ENCODE measurements at regions of chr2 and their contacts with region 1.

Region 1: DNA sequence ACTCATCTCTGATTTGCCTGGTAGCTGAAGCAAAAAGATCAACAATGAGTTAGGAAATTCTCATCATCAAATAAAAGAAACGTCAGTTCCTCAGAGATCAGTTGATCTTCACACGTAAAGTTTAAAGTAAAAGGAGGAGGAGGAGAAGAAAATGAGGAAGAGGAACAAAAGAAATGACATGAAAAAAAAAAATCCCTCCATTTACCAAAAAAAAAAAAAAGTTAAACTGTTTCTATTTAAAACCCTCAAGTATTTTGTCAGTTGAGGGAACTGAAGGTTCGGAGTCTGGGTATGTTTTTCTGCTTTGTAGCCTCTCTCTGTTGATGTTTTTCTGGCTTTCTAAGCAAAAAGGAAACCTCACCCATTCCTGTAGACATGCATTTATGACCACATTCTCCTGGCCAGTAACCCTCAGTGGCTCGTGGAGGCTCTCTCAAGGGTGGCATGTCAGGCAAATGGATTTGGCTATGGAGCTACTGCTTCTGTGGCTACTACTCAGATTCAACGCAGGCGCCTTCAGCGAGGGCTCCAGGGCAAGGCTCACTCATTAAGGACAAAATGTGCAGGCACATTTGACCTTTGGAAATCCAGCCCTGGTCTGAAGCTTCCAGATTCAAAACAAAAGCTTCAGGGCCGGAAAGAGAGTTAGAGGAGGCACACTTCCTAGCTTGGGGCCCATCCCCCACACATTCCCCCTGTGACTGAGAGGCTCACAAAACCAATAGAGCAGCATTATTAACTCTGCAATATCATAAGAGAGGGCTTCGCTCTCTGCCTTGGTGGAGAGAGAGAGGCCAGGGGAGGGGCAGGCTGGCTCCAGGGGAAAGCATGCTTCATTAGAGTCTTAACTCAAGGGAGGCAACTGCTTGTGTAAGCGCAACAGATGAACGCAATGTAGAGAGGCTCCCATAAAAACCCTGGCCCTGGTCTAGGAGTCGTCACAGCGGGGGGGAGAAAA is 22.3 kb downstream of the KLF7 start:
- DNase-seq: peak; percentile 34 to 92 (median 83)
- ATAC-seq: peak; percentile 83
- H3K4me3 ChIP-seq: peak overlapping the region; percentile 57
- H3K4me3 Mint-ChIP-seq: peak overlapping the region; percentile 59 to 90 (median 80)
- H3K27ac ChIP-seq: peak overlapping the region; percentile 86
- H3K27ac Mint-ChIP-seq: peak overlapping the region; percentile 92 to 99 (median 96)
- H3K4me1 ChIP-seq: peaks cover 17 to 51% of the 10 kb centered on the region in 2 donors
- H3K4me1 Mint-ChIP-seq: peaks cover 45 to 95% (median 87%) of the 10 kb centered on the region in 7 donors
- H3K27me3 ChIP-seq: no peaks in the 10 kb centered on the region
- H3K27me3 Mint-ChIP-seq: no peaks in the 10 kb centered on the region

Region 2: DNA sequence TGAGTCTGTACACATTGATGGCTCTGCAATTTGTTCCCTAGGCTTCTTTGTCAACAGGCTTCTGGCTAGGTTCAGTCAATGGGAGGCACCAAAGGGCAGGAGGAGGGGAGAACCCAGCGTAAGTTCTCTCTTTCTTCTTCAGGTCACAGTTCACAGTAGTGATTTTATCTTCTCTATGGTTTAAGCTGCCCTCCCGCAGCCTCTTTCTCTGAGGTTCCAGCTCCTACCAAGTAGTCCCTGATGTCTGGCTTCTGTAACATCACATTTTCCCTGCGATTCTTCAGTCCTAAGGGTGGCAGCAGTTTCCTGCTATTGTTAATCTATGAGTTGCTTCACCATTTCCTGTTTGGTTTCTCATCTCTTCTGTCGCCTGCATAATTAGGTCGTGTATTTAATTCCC is 96.8 kb before region 1 on chr2:
- CTCF ChIA-PET with region 1: interaction called, 5 read pairs
- POLR2A ChIA-PET with region 1: interaction called, 8 read pairs
- intact Hi-C with region 1: loop called in 1 of 2 experiments (anchors 1 kb)
- DNase-seq: peak in 8 of 9 donors; percentile 24 to 69 (median 52)
- ATAC-seq: peak; percentile 79
- H3K4me3 ChIP-seq: no peak overlapping the region
- H3K4me3 Mint-ChIP-seq: peak overlapping the region in 8 of 10 donors; percentile 0 to 66 (median 12)
- H3K27ac ChIP-seq: no peak overlapping the region
- H3K27ac Mint-ChIP-seq: peak overlapping the region; percentile 2 to 78 (median 56)
- H3K4me1 ChIP-seq: peaks cover 0 to 4% of the 10 kb centered on the region in 2 donors
- H3K4me1 Mint-ChIP-seq: peaks cover 11 to 14% (median 13%) of the 10 kb centered on the region in 7 donors
- H3K27me3 ChIP-seq: no peaks in the 10 kb centered on the region
- H3K27me3 Mint-ChIP-seq: peaks cover 0 to 16% (median 0%) of the 10 kb centered on the region in 5 donors

Region 3: DNA sequence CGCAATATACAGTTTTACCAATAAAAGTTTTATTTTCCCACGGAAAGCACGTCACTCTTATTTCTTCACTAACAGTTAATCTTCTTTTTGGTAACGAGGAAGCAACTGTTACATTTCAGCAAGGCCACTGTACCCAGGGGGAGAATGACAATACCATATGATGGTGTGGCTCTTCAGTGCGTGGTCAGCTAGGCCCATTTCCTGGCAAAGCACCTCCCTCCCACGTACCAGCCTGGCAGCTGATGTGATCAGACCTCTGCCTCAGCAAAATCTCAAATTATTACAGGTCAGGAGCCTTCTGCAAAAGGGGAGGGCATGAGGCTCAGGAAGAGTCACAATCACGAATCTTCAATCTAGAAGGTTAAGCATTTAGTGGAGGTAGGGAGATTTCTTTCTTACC is 33.2 kb before region 1 on chr2:
- CTCF ChIA-PET with region 1: no interaction called
- POLR2A ChIA-PET with region 1: interaction called, 18 read pairs
- intact Hi-C with region 1: no loop called
- DNase-seq: no peak
- ATAC-seq: no peak
- H3K4me3 ChIP-seq: no peak overlapping the region
- H3K4me3 Mint-ChIP-seq: no peak overlapping the region
- H3K27ac ChIP-seq: no peak overlapping the region
- H3K27ac Mint-ChIP-seq: peak overlapping the region in 1 of 9 donors; percentile 40
- H3K4me1 ChIP-seq: peaks cover 0 to 7% of the 10 kb centered on the region in 2 donors
- H3K4me1 Mint-ChIP-seq: peaks cover 19 to 83% (median 63%) of the 10 kb centered on the region in 7 donors
- H3K27me3 ChIP-seq: no peaks in the 10 kb centered on the region
- H3K27me3 Mint-ChIP-seq: no peaks in the 10 kb centered on the region

Region 4: GRCh38 chr2:207121784-207122183 is 21.7 kb before region 1 on chr2:
- CTCF ChIA-PET with region 1: no interaction called
- POLR2A ChIA-PET with region 1: interaction called, 12 read pairs
- intact Hi-C with region 1: no loop called
- DNase-seq: no peak
- ATAC-seq: no peak
- H3K4me3 ChIP-seq: no peak overlapping the region
- H3K4me3 Mint-ChIP-seq: no peak overlapping the region
- H3K27ac ChIP-seq: no peak overlapping the region
- H3K27ac Mint-ChIP-seq: no peak overlapping the region
- H3K4me1 ChIP-seq: peaks cover 0 to 6% of the 10 kb centered on the region in 2 donors
- H3K4me1 Mint-ChIP-seq: peaks cover 29 to 89% (median 55%) of the 10 kb centered on the region in 7 donors
- H3K27me3 ChIP-seq: no peaks in the 10 kb centered on the region
- H3K27me3 Mint-ChIP-seq: no peaks in the 10 kb centered on the region

Region 5: GRCh38 chr2:207238831-207239701 is 95.6 kb after region 1 on chr2:
- CTCF ChIA-PET with region 1: interaction called, 3 read pairs
- POLR2A ChIA-PET with region 1: interaction called, 11 read pairs
- intact Hi-C with region 1: loop called in 1 of 2 experiments (anchors 5 kb)
- DNase-seq: peak in 1 of 9 donors; percentile 54
- ATAC-seq: peak; percentile 69
- H3K4me3 ChIP-seq: no peak overlapping the region
- H3K4me3 Mint-ChIP-seq: peak overlapping the region in 6 of 10 donors; percentile 13 to 63 (median 44)
- H3K27ac ChIP-seq: no peak overlapping the region
- H3K27ac Mint-ChIP-seq: peak overlapping the region in 4 of 9 donors; percentile 13 to 77 (median 42)
- H3K4me1 ChIP-seq: peaks cover 0 to 27% of the 10 kb centered on the region in 2 donors
- H3K4me1 Mint-ChIP-seq: peaks cover 0 to 46% (median 17%) of the 10 kb centered on the region in 7 donors
- H3K27me3 ChIP-seq: no peaks in the 10 kb centered on the region
- H3K27me3 Mint-ChIP-seq: no peaks in the 10 kb centered on the region

Region 6: DNA sequence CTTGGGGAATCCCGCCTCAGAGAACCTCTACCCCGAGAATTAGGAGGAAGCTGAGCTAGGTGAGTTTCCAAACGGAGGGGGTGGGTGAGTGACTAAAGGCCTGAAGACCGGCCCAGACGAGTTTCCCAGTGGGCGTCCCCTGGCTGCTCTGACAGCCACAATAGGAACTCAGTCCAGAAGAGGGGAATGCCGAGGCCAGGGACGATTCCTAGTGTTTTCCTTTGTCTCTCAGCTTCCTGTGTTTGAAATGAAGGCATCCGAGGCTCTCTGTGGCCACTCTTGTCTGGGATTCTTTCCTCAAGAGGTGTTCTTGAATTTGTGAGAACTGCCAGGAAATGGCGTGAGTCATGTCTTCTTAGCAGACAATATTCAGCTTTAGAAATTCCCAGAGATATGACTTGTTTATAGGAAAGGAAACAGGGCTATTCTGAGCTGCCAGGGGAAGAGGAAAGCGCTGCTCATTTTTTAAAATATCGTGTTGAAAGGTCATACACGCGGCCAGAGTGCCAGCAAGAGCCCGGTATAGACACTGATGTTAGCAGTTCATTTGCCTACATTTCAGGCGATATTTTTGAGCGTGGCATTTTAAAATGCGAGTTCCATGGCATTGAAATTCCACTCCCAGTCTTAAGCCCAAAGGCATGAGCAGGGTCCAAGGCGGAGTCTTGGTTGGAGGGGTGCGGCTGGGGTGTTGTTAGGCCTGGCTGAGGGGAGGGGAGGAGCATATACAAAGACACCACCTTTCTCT is 191.3 kb after region 1 on chr2:
- CTCF ChIA-PET with region 1: no interaction called
- POLR2A ChIA-PET with region 1: no interaction called
- intact Hi-C with region 1: loop called in 1 of 2 experiments (anchors 5 kb)
- DNase-seq: peak in 1 of 9 donors; percentile 57
- ATAC-seq: no peak
- H3K4me3 ChIP-seq: no peak overlapping the region
- H3K4me3 Mint-ChIP-seq: peak overlapping the region in 2 of 10 donors; percentile 20 to 59
- H3K27ac ChIP-seq: no peak overlapping the region
- H3K27ac Mint-ChIP-seq: peak overlapping the region in 1 of 9 donors; percentile 84
- H3K4me1 ChIP-seq: peaks cover 0 to 20% of the 10 kb centered on the region in 2 donors
- H3K4me1 Mint-ChIP-seq: peaks cover 9 to 75% (median 17%) of the 10 kb centered on the region in 7 donors
- H3K27me3 ChIP-seq: no peaks in the 10 kb centered on the region
- H3K27me3 Mint-ChIP-seq: no peaks in the 10 kb centered on the region